SK-N-SH (cell line): ENCODE measurements at regions of chr5 and their contacts with region 1.

Region 1: GRCh38 chr5:77437194-77437593 is 54.9 kb downstream of the WDR41 start:
- DNase-seq: peak; percentile 25
- H3K4me3 ChIP-seq: no peak overlapping the region
- H3K27ac ChIP-seq: no peak overlapping the region
- H3K4me1 ChIP-seq: no peaks in the 10 kb centered on the region
- H3K27me3 ChIP-seq: no peaks in the 10 kb centered on the region
- CTCF ChIP-seq: no peak; the same call in 1 of the 2 replicates
- EP300 ChIP-seq: no peak
- RAD21 ChIP-seq: peak; percentile 79

Region 2: DNA sequence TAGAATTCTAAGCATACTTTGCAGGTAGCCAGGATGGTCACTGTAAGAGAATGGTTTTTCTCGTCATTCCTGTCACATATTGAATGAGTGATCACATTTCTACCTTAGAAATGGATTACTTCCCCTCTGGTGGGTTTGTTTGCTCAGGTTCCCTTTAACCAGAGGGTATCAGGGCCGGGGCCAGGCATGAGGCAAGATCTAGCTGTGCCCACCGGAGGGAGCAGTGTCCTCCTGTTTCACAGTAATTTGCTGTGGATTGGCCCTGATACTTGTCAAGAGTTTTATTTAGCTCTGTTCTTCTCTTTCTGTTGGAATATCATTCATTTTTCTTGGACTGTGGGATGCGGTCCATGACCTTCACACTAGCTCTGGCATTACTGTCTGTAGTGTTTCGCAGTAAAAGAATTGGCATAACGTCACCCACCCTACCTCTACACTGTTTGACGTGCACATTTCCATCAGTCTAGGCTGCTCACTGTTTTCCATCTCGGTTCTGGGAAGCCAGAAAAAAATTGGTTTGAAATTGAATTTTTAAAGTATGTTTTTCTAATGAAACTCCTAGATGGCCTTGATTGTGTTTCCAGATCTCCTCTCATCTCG is 307.7 kb before region 1 on chr5:
- CTCF ChIA-PET with region 1: interaction called, 15 read pairs
- POLR2A ChIA-PET with region 1: no interaction called
- DNase-seq: peak; percentile 46
- H3K4me3 ChIP-seq: peak overlapping the region in 1 of 2 experiments; percentile 17; a peak in 1 of 4 replicates
- H3K27ac ChIP-seq: no peak overlapping the region
- H3K4me1 ChIP-seq: 0 out of 4 replicates have a peak, but pooled peaks cover 0 to 4% of the 10 kb centered on the region in 2 experiments
- H3K27me3 ChIP-seq: peaks cover 51% of the 10 kb centered on the region
- CTCF ChIP-seq: peak; percentile 62
- EP300 ChIP-seq: no peak
- RAD21 ChIP-seq: peak; percentile 60

Region 3: DNA sequence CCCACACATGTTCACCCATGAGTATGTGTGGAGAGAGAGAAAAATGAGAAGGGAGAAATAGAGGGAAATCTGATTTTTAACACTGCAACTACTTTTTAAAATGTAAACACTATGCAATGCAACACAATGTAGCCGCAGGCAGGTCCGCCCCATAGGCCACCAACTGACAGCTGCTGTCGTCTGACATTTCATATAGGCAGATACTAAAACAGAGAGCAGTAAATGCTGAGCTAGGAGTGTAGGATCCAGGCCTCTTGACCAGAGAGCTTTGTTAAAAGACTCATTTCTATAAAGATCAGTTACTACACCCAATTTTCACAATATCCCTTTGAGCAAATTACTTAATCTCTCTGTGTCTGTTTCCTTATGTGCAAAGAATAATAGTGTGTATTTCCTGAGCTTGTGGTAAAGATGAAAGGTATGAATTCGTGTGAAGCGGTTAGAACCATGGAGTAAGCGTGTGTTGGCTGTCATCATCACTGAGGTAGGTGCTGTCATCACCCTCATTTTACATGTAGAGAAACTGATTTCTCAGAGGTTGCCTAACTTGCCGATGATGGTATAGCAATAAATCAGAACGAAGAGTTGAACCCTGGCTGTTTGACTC is 281.9 kb before region 1 on chr5:
- CTCF ChIA-PET with region 1: interaction called, 19 read pairs
- POLR2A ChIA-PET with region 1: no interaction called
- DNase-seq: no peak
- H3K4me3 ChIP-seq: no peak overlapping the region
- H3K27ac ChIP-seq: no peak overlapping the region
- H3K4me1 ChIP-seq: no peaks in the 10 kb centered on the region
- H3K27me3 ChIP-seq: peaks cover 24% of the 10 kb centered on the region; the same call in 1 of the 2 replicates
- CTCF ChIP-seq: no peak
- EP300 ChIP-seq: no peak
- RAD21 ChIP-seq: no peak

Region 4: DNA sequence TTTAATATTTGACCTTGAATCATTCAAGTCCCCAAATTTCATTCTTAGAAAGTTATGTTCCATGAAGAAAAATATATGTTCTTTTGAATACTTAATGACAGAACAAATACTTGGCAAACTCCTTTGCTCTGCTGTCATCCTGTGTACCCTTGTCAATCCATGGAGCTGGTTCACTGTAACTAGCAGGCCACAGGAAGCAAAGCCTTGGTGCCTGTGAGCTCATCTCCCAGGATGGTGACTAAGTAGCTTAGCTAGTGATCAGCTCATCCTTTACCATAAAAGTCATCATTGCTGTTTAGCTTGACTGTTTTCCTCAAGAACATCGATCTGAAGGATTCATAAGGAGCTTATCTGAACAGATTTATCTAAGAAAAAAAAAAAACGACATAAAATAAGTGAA is 10.5 kb before region 1 on chr5:
- CTCF ChIA-PET with region 1: interaction called, 17 read pairs
- POLR2A ChIA-PET with region 1: no interaction called
- DNase-seq: no peak
- H3K4me3 ChIP-seq: no peak overlapping the region
- H3K27ac ChIP-seq: peak overlapping the region in 1 of 2 experiments; percentile 48; a peak in 2 of 4 replicates
- H3K4me1 ChIP-seq: peaks cover 0 to 14% of the 10 kb centered on the region in 2 experiments; a peak in 1 of 4 replicates
- H3K27me3 ChIP-seq: no peaks in the 10 kb centered on the region
- CTCF ChIP-seq: no peak
- EP300 ChIP-seq: no peak
- RAD21 ChIP-seq: no peak

Region 5: DNA sequence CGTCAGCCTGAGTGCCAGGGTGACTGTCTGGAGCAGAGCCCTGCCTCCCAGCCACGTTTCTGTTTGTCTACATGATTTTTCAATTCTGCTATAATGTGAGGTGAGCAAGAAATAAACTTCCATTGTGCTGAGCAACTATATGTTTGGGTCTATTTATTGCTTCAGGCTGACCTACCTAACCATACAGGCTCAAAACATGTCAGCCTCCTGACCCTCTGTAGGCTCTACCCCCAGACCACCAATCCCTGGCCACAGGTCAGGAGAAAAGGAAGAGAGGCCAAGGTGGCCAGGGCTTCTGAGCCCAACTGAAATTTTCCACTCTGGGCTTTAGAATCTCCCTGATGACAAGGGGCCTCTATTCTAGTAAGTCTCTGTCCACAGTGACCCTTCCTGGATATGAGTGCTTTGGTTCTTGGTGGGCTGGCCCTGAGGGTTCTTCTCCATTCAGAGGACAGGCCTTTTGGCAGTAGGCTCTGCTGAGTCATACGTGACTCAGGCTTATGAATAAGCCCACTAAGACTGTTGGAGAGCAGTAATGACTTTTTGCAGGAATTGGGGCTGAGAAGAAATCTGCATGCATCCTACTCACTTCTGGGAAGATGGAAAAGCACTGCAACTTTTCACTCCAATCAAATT is 456.1 kb after region 1 on chr5:
- CTCF ChIA-PET with region 1: no interaction called
- POLR2A ChIA-PET with region 1: no interaction called
- DNase-seq: no peak
- H3K4me3 ChIP-seq: no peak overlapping the region
- H3K27ac ChIP-seq: peak overlapping the region in 1 of 2 experiments; percentile 64; a peak in 2 of 4 replicates
- H3K4me1 ChIP-seq: peaks cover 0 to 9% of the 10 kb centered on the region in 2 experiments; a peak in 2 of 4 replicates
- H3K27me3 ChIP-seq: no peaks in the 10 kb centered on the region
- CTCF ChIP-seq: no peak
- EP300 ChIP-seq: peak in 1 of 2 experiments; percentile 46; a peak in 1 of 4 replicates
- RAD21 ChIP-seq: no peak